Activated B cell treated with CpG ODN at 0.5 μM for 24 hours (primary cell): ENCODE measurements at regions of chr19 and their contacts with region 1.

Region 1: GRCh38 chr19:12938234-12939025 is at the start of gene CALR:
- DNase-seq: peak; percentile 96
- ATAC-seq: peak; percentile 85
- H3K4me3 Mint-ChIP-seq: peak within 1 kb of the TSS; percentile 99
- H3K27ac Mint-ChIP-seq: peak within 1 kb of the TSS; percentile 95
- H3K4me1 Mint-ChIP-seq: peaks cover 62% of the 10 kb centered on the region
- H3K27me3 Mint-ChIP-seq: no peaks in the 10 kb centered on the region
- CTCF ChIP-seq: no peak
- total RNA-seq, gene CALR: 721 and 802 TPM in 2 replicates

Region 2: DNA sequence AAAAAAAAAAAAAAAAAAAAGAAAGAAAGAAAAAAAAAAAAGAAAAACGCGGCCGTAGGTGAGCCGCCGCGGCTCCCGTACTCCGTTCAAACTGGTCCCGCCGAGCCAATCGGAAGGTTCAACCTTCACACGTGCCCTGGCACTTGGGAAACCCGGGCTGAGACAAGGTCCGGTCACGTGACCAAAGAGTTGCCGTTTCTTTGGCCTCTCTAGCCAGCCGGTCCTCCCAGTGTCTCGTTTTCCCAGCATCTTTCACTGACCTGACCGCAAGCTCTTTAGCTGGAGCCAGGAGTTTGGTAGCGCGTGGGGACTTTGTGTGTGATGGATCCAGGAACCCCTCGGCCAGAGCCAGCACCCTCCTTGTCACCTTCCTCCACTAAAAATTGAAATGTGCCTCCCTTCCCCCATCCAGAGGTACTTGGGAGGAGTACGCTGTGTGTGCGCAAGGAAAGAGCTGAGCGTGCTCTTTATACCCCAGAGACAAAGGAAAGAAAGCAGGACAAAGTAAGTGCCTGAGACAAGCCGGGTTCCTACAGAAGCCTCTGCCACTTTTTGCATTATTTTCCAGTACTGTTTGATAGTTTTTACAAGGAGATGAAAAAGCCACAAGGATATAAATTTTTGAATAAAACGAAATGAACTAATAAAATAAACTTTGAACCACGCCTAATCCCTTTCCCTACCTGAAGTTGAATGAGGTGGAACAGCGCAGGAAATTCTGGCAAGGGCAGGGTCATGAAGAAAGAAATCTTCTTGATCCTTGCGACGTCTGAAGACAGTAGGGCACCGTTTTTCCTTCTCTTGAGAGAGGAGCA is 215.7 kb before region 1 on chr19:
- CTCF ChIA-PET with region 1: no interaction called
- POLR2A ChIA-PET with region 1: interaction called, 4 read pairs
- intact Hi-C with region 1: loop called (anchors 5 kb)
- DNase-seq: peak; percentile 75
- ATAC-seq: peak; percentile 84
- H3K4me3 Mint-ChIP-seq: peak overlapping the region; percentile 92
- H3K27ac Mint-ChIP-seq: peak overlapping the region; percentile 90
- H3K4me1 Mint-ChIP-seq: peaks cover 43% of the 10 kb centered on the region
- H3K27me3 Mint-ChIP-seq: no peaks in the 10 kb centered on the region
- CTCF ChIP-seq: no peak

Region 3: GRCh38 chr19:12890787-12891552 is 47.5 kb before region 1 on chr19 and contains the start of gene GCDH:
- CTCF ChIA-PET with region 1: interaction called, 5 read pairs
- POLR2A ChIA-PET with region 1: interaction called, 24 read pairs
- intact Hi-C with region 1: loop called (anchors 1 kb)
- DNase-seq: peak; percentile 81
- ATAC-seq: peak; percentile 93
- H3K4me3 Mint-ChIP-seq: peak within 1 kb of the TSS; percentile 98
- H3K27ac Mint-ChIP-seq: peak within 1 kb of the TSS; percentile 90
- H3K4me1 Mint-ChIP-seq: peaks cover 21% of the 10 kb centered on the region
- H3K27me3 Mint-ChIP-seq: no peaks in the 10 kb centered on the region
- CTCF ChIP-seq: no peak
- total RNA-seq, gene GCDH: 62.3 and 73.9 TPM in 2 replicates

Region 4: GRCh38 chr19:12956446-12957388 is 18.3 kb after region 1 on chr19 and contains the start of gene GADD45GIP1:
- CTCF ChIA-PET with region 1: no interaction called
- POLR2A ChIA-PET with region 1: interaction called, 37 read pairs
- intact Hi-C with region 1: loop called (anchors 2 kb)
- DNase-seq: peak; percentile 78
- ATAC-seq: peak; percentile 98
- H3K4me3 Mint-ChIP-seq: peak within 1 kb of the TSS; percentile 91
- H3K27ac Mint-ChIP-seq: peak within 1 kb of the TSS; percentile 97
- H3K4me1 Mint-ChIP-seq: peaks cover 33% of the 10 kb centered on the region
- H3K27me3 Mint-ChIP-seq: no peaks in the 10 kb centered on the region
- CTCF ChIP-seq: no peak
- total RNA-seq, gene GADD45GIP1: 16.7 and 19.6 TPM in 2 replicates

Region 5: GRCh38 chr19:14081325-14082093 is 1143.1 kb after region 1 on chr19:
- CTCF ChIA-PET with region 1: no interaction called
- POLR2A ChIA-PET with region 1: interaction called, 10 read pairs
- intact Hi-C with region 1: no loop called
- DNase-seq: peak; percentile 98
- ATAC-seq: peak; percentile 91
- H3K4me3 Mint-ChIP-seq: peak overlapping the region; percentile 94
- H3K27ac Mint-ChIP-seq: peak overlapping the region; percentile 95
- H3K4me1 Mint-ChIP-seq: peaks cover 17% of the 10 kb centered on the region
- H3K27me3 Mint-ChIP-seq: no peaks in the 10 kb centered on the region
- CTCF ChIP-seq: no peak